Gastrocnemius medialis (tissue), 4 donors: ENCODE measurements at regions of chr13 and their contacts with region 1.

Region 1: DNA sequence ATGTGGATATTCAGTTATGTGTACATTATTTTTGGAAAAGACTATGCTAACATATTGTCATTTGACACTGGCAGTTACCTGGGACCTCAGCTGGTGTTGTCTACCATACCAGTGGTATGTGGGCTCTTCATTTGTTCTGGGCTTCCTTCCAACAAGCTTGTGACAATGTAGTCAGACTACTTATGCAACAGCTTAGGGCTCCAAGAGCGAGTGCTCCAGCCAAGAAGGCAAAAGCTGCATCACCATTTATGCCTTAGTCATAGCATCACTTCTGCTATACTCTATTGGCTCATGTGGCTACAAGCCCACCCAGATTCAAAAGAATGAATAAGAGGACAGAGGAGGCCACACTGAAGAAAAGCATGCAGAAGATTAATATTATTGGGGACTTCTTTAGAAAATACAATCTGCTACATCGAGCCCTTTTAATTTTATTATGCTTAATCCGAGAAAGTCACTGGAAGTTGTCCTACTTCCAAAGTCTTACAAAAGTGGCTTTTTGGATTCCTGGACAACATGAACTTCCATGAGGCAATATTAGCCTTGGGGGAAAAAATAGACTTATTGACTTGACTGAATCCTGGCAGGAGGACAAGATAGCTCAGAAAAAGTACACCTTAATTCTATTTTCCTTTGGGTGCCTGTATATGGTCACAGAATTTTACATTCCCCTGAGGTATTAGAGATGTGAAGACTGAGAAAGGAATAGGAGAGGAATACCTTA is 529.4 kb upstream of the HTR2A start:
- DNase-seq: peak; percentile 30 to 72
- ATAC-seq: peak; percentile 77 to 98
- H3K4me3 ChIP-seq: no peak overlapping the region
- H3K27ac ChIP-seq: peak overlapping the region in 3 of 4 donors; percentile 20 to 58 (median 54)
- H3K4me1 ChIP-seq: no peaks in the 10 kb centered on the region
- H3K27me3 ChIP-seq: no peaks in the 10 kb centered on the region
- CTCF ChIP-seq: no peak
- POLR2A ChIP-seq: no peak

Region 2: GRCh38 chr13:47499358-47500150 is 73.3 kb after region 1 on chr13:
- in situ Hi-C with region 1: no loop called
- intact Hi-C with region 1: loop called (anchors 5 kb)
- DNase-seq: no peak
- ATAC-seq: peak; percentile 69 to 86
- H3K4me3 ChIP-seq: no peak overlapping the region
- H3K27ac ChIP-seq: peak overlapping the region in 2 of 4 donors; percentile 30 to 65
- H3K4me1 ChIP-seq: no peaks in the 10 kb centered on the region
- H3K27me3 ChIP-seq: no peaks in the 10 kb centered on the region
- CTCF ChIP-seq: no peak
- POLR2A ChIP-seq: no peak

Region 3: DNA sequence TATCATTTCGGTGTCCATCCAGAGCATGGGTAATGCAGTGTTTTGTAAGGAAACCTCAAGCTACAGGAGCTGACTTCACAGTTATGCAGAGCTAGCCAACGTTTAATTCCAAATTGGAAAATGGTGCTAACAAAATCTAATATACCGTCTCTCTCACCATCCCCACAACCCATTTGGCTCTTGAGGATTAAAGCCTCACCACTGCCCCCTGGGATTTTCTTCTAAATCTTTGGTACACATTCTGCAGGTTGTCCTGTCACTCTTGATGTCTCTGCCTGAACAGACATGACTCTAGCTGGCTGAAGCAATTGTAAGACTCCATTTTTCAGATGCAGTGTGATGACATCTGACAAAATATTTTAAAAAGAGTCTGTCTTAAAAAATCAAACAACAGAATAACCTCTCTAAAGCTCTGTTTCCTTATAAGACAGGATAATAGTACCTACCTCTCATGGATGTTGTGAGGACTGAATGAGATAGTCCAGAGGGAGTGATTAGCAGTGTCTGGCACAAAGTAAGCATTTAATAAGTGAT is 123.0 kb after region 1 on chr13:
- in situ Hi-C with region 1: no loop called
- intact Hi-C with region 1: loop called (anchors 10 kb)
- DNase-seq: no peak
- ATAC-seq: no peak
- H3K4me3 ChIP-seq: no peak overlapping the region
- H3K27ac ChIP-seq: no peak overlapping the region
- H3K4me1 ChIP-seq: peaks cover 0 to 14% of the 10 kb centered on the region in 2 donors
- H3K27me3 ChIP-seq: no peaks in the 10 kb centered on the region
- CTCF ChIP-seq: no peak
- POLR2A ChIP-seq: no peak